ENCODE measurements at regions of chr17 and their contacts with region 1.

Region 1: DNA sequence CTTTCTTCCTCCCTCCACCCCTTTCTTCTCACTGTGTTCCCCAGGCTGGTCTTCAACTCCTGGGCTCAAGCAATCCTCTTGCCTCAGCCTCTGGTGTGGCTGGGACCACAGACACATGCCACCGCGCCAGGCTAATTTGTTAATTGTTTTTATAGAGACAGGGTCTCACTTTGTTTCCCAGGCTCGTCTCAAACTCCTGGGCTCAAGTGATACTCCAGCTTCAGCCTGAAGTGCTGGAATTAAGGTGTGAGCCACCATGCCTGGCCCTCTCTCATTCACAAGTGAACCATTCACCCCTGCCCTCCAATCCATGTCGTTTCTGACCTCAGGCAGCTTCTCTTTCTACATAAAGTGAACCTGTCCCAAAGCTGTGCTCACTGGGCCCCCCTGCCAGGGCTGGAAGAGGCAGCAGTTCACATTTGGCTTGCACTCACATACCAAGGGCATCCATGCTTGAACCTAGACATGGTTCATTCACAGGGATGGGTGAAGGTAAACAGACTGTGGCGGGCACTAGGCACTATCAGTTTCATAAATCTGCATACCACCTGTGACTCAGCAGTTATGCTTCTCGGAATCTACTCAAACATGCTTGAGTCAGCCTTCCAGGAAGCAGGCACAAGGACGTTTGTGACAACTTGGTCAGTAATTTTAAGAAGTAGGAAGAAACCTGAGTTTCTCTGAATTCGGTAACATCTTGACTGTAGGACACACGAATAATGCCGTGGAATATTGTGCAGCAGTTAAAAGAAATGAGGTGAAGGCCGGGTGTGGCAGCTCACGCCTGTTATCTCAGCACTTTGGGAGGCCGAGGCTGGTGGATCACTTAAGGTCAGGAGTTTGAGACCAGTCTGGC is 6.0 kb upstream of the RNF213 start:
- DNase-seq: peak; percentile 100
- ATAC-seq: peak; percentile 90
- H3K4me3 ChIP-seq: peak overlapping the region; percentile 29; the same call in 1 of the 2 replicates
- H3K27ac ChIP-seq: peak overlapping the region; percentile 86
- H3K4me1 ChIP-seq: peaks cover 34% of the 10 kb centered on the region
- H3K27me3 ChIP-seq: no peaks in the 10 kb centered on the region
- CTCF ChIP-seq: no peak

Region 2: GRCh38 chr17:80082403-80083135 is 172.1 kb before region 1 on chr17:
- CTCF ChIA-PET with region 1: no interaction called
- POLR2A ChIA-PET with region 1: no interaction called
- intact Hi-C with region 1: loop called (anchors 2 kb)
- DNase-seq: peak; percentile 91
- ATAC-seq: peak; percentile 88
- H3K4me3 ChIP-seq: peak overlapping the region; percentile 46; the same call in 1 of the 2 replicates
- H3K27ac ChIP-seq: no peak overlapping the region
- H3K4me1 ChIP-seq: 0 out of 2 replicates have a peak, but pooled peaks cover 3% of the 10 kb centered on the region
- H3K27me3 ChIP-seq: no peaks in the 10 kb centered on the region
- CTCF ChIP-seq: peak; percentile 94

Region 3: GRCh38 chr17:80101011-80101945 is 153.3 kb before region 1 on chr17 and contains the start of gene GAA:
- CTCF ChIA-PET with region 1: no interaction called
- POLR2A ChIA-PET with region 1: no interaction called
- intact Hi-C with region 1: loop called (anchors 5 kb)
- DNase-seq: peak; percentile 94
- ATAC-seq: peak; percentile 88
- H3K4me3 ChIP-seq: peak within 1 kb of the TSS; percentile 96
- H3K27ac ChIP-seq: no peak within 1 kb of the TSS
- H3K4me1 ChIP-seq: peaks cover 18% of the 10 kb centered on the region
- H3K27me3 ChIP-seq: no peaks in the 10 kb centered on the region
- CTCF ChIP-seq: peak; percentile 74
- total RNA-seq, gene GAA: 76.2 and 126 TPM in 2 replicates

Region 4: DNA sequence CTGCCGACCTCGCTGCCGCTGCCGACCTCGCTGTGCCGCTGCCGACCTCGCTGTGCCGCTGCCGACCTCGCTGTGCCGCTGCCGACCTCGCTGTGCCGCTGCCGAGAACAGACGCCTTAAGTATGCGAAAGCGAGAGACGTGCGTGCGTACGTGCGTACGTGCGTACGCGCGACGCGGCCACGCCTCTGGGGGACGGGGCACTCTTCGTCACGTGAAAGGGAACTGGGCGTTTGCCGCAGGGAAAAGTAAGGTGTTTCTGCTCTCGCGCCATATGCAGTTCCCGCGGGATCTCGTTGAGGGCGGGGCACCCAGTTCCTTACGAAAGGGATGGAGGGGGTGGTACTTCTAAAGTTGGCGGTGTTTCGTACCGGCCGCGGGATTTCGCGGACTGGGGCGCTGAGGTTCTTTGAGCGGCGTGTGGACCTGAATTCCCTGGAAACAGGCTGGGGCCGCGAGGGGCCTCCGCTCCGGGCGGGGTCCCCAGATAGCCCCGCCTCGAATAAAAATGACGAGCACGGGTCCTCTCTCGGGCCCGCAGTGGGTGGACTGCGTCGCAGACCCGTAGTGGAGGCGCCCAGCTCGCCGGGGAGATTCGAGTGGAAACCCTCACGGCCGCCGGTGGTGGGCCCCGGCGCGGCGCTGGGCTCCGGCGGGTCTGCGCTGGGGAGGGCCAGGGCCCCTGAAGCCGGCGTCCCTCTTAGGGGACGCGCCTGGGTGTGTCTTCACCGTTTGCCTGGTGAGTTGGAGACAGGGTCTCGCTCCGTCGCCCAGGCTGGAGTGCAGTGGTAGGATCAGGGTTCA is 107.4 kb before region 1 on chr17 and contains the start of gene EIF4A3:
- CTCF ChIA-PET with region 1: no interaction called
- POLR2A ChIA-PET with region 1: interaction called, 4 read pairs
- intact Hi-C with region 1: loop called (anchors 1 kb)
- DNase-seq: peak; percentile 100
- ATAC-seq: peak; percentile 91
- H3K4me3 ChIP-seq: peak within 1 kb of the TSS; percentile 91
- H3K27ac ChIP-seq: peak within 1 kb of the TSS; percentile 62
- H3K4me1 ChIP-seq: peaks cover 12% of the 10 kb centered on the region
- H3K27me3 ChIP-seq: no peaks in the 10 kb centered on the region
- CTCF ChIP-seq: no peak
- total RNA-seq, gene EIF4A3: 167 and 185 TPM in 2 replicates

Region 5: GRCh38 chr17:80169784-80170500 is 84.7 kb before region 1 on chr17 and contains the start of gene CARD14:
- CTCF ChIA-PET with region 1: no interaction called
- POLR2A ChIA-PET with region 1: no interaction called
- intact Hi-C with region 1: no loop called
- DNase-seq: peak; percentile 91
- ATAC-seq: peak; percentile 91
- H3K4me3 ChIP-seq: peak within 1 kb of the TSS; percentile 57
- H3K27ac ChIP-seq: no peak within 1 kb of the TSS
- H3K4me1 ChIP-seq: peaks cover 10% of the 10 kb centered on the region
- H3K27me3 ChIP-seq: no peaks in the 10 kb centered on the region
- CTCF ChIP-seq: no peak
- total RNA-seq, gene CARD14: 2.3 and 4.4 TPM in 2 replicates

Region 6: DNA sequence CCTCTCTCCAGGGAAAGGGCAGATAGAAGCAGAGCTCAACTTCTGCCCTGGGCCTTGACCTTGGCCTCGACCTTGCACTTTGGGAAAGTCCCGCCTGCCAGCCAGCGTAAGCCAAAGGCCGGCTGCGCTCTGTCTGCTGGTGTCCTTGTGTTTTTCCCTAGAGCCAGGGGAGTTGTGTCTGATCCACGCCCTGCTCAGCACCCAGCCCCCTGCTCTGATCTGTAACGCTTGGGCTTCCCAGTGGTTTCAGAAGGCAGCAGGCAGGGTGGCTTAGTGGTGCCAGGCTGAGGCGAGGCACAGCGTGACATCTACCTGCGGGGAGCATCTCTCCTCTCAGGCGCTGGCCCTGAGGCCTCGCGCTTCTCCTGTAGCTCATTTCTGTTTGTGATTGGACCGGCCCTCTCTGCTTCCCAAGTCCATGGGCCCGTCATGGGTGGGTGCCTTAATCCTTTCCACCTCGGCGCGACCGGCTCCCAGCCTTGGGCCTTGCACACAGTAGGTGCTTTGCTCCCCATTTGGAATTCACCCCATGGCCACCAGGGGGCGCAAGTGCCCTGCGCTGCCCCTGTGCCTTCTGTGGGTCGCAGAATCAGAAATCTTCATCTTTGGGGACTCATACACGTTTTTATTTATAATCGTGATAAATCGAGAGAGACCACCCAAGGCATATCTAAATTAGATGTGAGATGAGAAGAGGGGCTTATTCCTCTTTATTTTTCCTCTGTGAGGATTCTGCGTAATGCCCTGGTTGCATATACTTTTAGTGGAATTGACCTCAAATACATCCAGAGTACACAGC is 58.7 kb before region 1 on chr17:
- CTCF ChIA-PET with region 1: no interaction called
- POLR2A ChIA-PET with region 1: no interaction called
- intact Hi-C with region 1: loop called (anchors 2 kb)
- DNase-seq: peak; percentile 52
- ATAC-seq: no peak
- H3K4me3 ChIP-seq: no peak overlapping the region
- H3K27ac ChIP-seq: no peak overlapping the region
- H3K4me1 ChIP-seq: no peaks in the 10 kb centered on the region
- H3K27me3 ChIP-seq: no peaks in the 10 kb centered on the region
- CTCF ChIP-seq: peak; percentile 99

Region 7: GRCh38 chr17:80219013-80219762 is 35.4 kb before region 1 on chr17:
- CTCF ChIA-PET with region 1: no interaction called
- POLR2A ChIA-PET with region 1: no interaction called
- intact Hi-C with region 1: loop called (anchors 2 kb)
- DNase-seq: peak; percentile 90
- ATAC-seq: peak; percentile 48
- H3K4me3 ChIP-seq: peak overlapping the region; percentile 82
- H3K27ac ChIP-seq: peak overlapping the region; percentile 31
- H3K4me1 ChIP-seq: peaks cover 20% of the 10 kb centered on the region
- H3K27me3 ChIP-seq: no peaks in the 10 kb centered on the region
- CTCF ChIP-seq: no peak

Measured in PC-3 (cell line).